Activated CD4-positive, alpha-beta memory T cell treated with anti-CD3 and anti-CD28 coated beads for 36 hours (primary cell): ENCODE measurements at regions of chr3 and their contacts with region 1.

Region 1: DNA sequence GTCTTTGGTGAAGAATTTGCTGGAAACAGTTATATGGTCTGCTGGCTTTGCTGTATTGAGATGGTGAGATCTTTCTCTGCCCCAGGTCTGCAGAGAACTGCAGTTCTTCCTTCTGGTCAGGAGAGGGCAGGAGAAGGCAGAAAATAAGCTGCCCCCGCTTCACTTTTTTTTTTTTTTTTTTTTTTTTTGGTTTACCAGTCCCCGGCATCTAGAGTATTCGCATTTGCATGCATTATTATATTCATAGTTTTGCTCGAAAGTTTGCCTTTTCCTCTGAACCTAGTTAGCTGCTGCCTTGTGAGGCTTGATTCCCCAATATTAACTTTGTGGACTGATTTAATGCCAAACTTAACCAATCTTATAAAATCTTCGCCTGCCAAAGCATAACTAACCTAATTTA is 10.6 kb upstream of the PARL start:
- DNase-seq: peak; percentile 41
- H3K4me3 Mint-ChIP-seq: no peak overlapping the region
- H3K27ac Mint-ChIP-seq: no peak overlapping the region
- H3K4me1 Mint-ChIP-seq: no peaks in the 10 kb centered on the region
- H3K27me3 Mint-ChIP-seq: peaks cover 15% of the 10 kb centered on the region

Region 2: GRCh38 chr3:183584246-183584913 is 310.9 kb before region 1 on chr3:
- CTCF ChIA-PET with region 1: no interaction called
- POLR2A ChIA-PET with region 1: no interaction called
- intact Hi-C with region 1: no loop called
- DNase-seq: no peak
- H3K4me3 Mint-ChIP-seq: no peak overlapping the region
- H3K27ac Mint-ChIP-seq: no peak overlapping the region
- H3K4me1 Mint-ChIP-seq: peaks cover 28% of the 10 kb centered on the region
- H3K27me3 Mint-ChIP-seq: no peaks in the 10 kb centered on the region

Region 3: GRCh38 chr3:184017672-184018423 is 122.6 kb after region 1 on chr3 and contains the start of gene ABCC5:
- CTCF ChIA-PET with region 1: interaction called, 17 read pairs
- POLR2A ChIA-PET with region 1: no interaction called
- intact Hi-C with region 1: loop called (anchors 1 kb)
- DNase-seq: peak; percentile 89
- H3K4me3 Mint-ChIP-seq: peak within 1 kb of the TSS; percentile 99
- H3K27ac Mint-ChIP-seq: peak within 1 kb of the TSS; percentile 85
- H3K4me1 Mint-ChIP-seq: peaks cover 23% of the 10 kb centered on the region
- H3K27me3 Mint-ChIP-seq: peaks cover 5% of the 10 kb centered on the region
- total RNA-seq, gene ABCC5: 13.3 to 15.6 TPM

Region 4: GRCh38 chr3:184289426-184289938 is 394.2 kb after region 1 on chr3:
- CTCF ChIA-PET with region 1: interaction called, 10 read pairs
- POLR2A ChIA-PET with region 1: no interaction called
- intact Hi-C with region 1: loop called (anchors 1 kb)
- DNase-seq: peak; percentile 81
- H3K4me3 Mint-ChIP-seq: no peak overlapping the region
- H3K27ac Mint-ChIP-seq: no peak overlapping the region
- H3K4me1 Mint-ChIP-seq: peaks cover 2% of the 10 kb centered on the region
- H3K27me3 Mint-ChIP-seq: peaks cover 5% of the 10 kb centered on the region